ENCODE measurements at regions of chr4 and their contacts with region 1.

Region 1: DNA sequence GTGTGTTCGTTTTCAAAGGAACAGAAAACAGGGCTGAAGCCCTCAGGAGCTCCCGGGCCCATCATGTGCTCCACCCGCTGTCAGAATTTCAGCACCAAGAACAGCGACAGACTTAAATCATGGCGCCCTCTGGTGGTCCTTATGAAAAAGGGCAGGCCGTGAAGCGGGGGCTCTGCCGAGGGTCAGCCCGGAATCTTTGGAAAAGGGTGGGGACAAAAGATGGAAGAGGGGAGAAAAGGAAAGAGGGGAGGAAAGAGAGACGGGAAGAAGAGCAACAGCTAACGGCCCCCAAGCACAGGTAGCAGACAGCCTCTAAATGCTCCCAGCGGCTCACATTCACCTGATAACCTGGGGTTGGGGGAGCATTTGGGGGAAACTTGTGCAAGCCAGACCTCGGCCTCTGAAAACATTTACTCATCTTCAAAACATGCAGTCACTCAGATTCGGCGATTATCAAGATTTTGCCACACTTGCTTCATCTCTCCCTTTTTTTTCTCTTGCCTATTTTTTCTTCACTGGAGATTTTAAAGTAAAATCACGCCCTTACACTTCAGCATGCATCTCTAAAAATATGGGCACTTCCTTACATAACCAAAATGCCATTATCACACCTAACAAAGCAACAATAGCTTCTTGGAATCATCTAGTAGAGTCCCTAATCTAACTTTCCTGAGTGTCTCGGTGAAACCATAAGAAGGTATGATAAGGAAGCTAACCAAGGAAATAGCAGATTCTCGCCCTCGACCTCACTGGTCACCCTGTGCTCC is 28.1 kb upstream of the MAN2B2 start:
- DNase-seq: no peak
- ATAC-seq: peak; percentile 62 to 82 (median 72)
- H3K4me3 ChIP-seq: no peak overlapping the region
- H3K27ac ChIP-seq: no peak overlapping the region
- H3K4me1 ChIP-seq: no peaks in the 10 kb centered on the region
- H3K27me3 ChIP-seq: peaks cover 0 to 7% of the 10 kb centered on the region in 2 donors
- CTCF ChIP-seq: peak; percentile 55 to 89 (median 80)
- POLR2A ChIP-seq: no peak

Region 2: DNA sequence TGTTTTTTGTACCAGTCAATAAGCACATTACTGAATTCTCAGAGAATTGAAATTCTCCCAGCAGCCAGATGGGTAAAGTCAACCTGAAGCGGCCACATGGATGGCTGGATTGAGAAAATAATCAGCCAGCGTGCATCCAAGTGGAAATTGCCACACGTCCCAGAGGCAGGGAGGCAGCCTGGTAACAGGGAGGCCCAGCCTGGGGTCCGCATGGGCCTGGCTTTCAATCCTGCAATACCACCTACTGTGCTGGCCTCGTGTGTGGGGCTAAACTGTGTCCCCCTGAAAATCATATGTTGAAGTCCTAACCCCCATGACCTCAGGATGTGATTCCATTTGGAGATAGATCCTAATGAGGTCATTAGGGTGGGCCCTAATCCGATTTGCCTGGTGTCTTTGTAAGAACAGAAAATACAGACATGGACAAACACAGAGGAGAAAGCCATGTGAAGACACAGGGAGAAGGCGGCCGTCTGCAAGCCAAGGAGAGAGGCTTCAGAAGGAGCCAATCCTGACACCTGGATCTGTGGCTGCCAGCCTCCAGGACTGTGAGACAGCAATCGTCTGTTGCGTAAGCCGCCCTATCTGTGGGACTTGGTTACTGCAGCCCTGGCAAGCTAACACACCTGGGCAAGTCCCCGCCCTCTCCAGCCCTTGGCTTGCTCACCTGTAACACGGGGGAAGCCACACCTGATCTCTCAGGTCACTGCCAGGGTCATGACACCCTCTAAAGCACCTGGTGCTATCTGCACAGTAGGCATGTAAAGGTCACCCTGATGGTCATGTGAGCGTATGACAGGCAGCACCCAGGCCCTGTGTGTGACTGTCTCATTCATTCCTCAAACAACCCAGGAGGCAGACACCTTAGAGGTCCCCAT is 436.8 kb before region 1 on chr4:
- intact Hi-C with region 1: no loop called
- DNase-seq: no peak
- ATAC-seq: peak; percentile 22 to 62 (median 36)
- H3K4me3 ChIP-seq: no peak overlapping the region
- H3K27ac ChIP-seq: no peak overlapping the region
- H3K4me1 ChIP-seq: no peaks in the 10 kb centered on the region
- H3K27me3 ChIP-seq: no peaks in the 10 kb centered on the region
- CTCF ChIP-seq: peak in 2 of 4 donors; percentile 26 to 38
- POLR2A ChIP-seq: no peak

Region 3: GRCh38 chr4:6250235-6250983 is 296.5 kb before region 1 on chr4:
- intact Hi-C with region 1: loop called in 1 of 2 experiments (anchors 10 kb)
- DNase-seq: no peak
- ATAC-seq: peak; percentile 74 to 89 (median 81)
- H3K4me3 ChIP-seq: no peak overlapping the region
- H3K27ac ChIP-seq: no peak overlapping the region
- H3K4me1 ChIP-seq: no peaks in the 10 kb centered on the region
- H3K27me3 ChIP-seq: peaks cover 0 to 5% of the 10 kb centered on the region in 2 donors
- CTCF ChIP-seq: peak; percentile 80 to 91 (median 84)
- POLR2A ChIP-seq: no peak

Region 4: DNA sequence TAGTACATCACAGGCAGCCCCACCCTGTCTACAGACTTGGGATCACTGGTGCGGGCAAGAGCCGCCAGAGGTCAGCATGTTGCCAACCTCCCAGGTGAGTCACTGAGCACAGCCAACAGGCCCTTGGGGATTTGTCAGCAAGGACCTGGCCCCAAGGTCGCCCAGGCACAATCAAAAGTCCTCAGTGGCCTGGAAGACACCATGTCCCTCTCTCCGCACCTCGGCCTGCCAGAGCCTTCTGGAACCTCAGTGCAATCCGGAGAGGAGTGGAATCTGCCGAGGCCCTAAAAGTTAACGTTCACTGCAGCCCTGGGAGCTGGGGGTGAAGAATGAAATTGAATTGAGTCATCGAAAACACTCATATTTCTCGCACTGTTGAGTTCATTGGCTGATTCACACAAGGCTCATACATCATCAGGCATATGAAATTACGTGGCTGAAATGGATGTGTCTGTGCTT is 202.9 kb before region 1 on chr4:
- intact Hi-C with region 1: loop called in 1 of 2 experiments (anchors 10 kb)
- DNase-seq: peak in 1 of 3 donors; percentile 45
- ATAC-seq: peak in 3 of 4 donors; percentile 19 to 78 (median 52)
- H3K4me3 ChIP-seq: no peak overlapping the region
- H3K27ac ChIP-seq: no peak overlapping the region
- H3K4me1 ChIP-seq: no peaks in the 10 kb centered on the region
- H3K27me3 ChIP-seq: no peaks in the 10 kb centered on the region
- CTCF ChIP-seq: no peak
- POLR2A ChIP-seq: no peak

Region 5: GRCh38 chr4:6390356-6390755 is 156.5 kb before region 1 on chr4:
- intact Hi-C with region 1: no loop called
- DNase-seq: no peak
- ATAC-seq: peak; percentile 14 to 64 (median 30)
- H3K4me3 ChIP-seq: no peak overlapping the region
- H3K27ac ChIP-seq: no peak overlapping the region
- H3K4me1 ChIP-seq: no peaks in the 10 kb centered on the region
- H3K27me3 ChIP-seq: no peaks in the 10 kb centered on the region
- CTCF ChIP-seq: no peak
- POLR2A ChIP-seq: no peak

Measured in right lobe of liver (tissue), 6 donors.